Caco-2 (cell line): ENCODE measurements at regions of chr4 and their contacts with region 1.

Region 1: DNA sequence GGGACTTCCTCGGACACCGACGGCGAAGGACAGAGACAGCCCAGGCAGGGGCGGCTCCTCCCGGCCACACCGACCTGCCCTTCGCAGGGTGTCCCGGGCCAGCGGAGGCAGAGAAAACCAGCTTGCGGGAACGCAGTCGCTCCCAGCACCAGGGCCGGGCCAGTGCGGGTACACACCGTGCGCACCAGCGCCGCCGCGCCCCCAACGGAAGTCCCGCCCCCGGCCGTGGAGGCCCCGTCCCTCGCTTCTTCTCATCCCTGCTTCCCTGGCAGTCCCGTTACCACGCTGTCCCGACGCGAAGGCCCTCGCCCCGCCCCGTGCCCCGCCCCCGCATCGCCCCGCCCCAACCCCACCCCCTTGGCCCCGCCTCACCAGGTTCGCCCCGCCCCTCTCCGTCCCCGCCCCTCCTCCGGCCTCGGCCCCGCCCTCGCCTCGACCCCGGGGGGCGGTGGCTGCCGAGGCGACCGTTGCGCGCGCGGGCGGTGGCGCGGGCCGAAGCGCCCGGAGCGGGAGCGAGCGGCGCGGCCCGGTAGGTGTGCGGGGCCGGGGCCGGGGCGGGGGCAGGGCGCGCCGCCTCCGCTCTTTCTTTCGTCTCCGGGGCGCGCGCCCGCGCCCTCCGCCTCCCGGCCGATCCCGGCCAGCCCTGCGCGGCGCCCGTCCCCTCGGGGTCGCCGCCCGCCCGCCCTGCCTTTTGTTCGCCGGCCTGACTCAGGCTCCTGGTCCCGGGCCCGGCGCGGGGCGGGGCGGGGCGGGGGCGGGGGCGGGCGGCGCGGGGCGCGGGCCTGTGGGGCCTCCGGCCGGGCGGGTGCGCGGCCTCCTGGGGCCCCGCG is at the start of gene RGS12:
- DNase-seq: peak; percentile 95 to 96
- H3K4me3 ChIP-seq: peak within 1 kb of the TSS; percentile 82
- H3K4me3 Mint-ChIP-seq: peak within 1 kb of the TSS; percentile 88
- H3K27ac Mint-ChIP-seq: peak within 1 kb of the TSS; percentile 77
- H3K4me1 ChIP-seq: no peaks in the 10 kb centered on the region
- H3K4me1 Mint-ChIP-seq: peaks cover 17% of the 10 kb centered on the region
- H3K27me3 ChIP-seq: no peaks in the 10 kb centered on the region
- H3K27me3 Mint-ChIP-seq: no peaks in the 10 kb centered on the region
- CTCF ChIP-seq: no peak
- total RNA-seq, gene RGS12: 23.1 and 24.1 TPM in 2 replicates

Region 2: DNA sequence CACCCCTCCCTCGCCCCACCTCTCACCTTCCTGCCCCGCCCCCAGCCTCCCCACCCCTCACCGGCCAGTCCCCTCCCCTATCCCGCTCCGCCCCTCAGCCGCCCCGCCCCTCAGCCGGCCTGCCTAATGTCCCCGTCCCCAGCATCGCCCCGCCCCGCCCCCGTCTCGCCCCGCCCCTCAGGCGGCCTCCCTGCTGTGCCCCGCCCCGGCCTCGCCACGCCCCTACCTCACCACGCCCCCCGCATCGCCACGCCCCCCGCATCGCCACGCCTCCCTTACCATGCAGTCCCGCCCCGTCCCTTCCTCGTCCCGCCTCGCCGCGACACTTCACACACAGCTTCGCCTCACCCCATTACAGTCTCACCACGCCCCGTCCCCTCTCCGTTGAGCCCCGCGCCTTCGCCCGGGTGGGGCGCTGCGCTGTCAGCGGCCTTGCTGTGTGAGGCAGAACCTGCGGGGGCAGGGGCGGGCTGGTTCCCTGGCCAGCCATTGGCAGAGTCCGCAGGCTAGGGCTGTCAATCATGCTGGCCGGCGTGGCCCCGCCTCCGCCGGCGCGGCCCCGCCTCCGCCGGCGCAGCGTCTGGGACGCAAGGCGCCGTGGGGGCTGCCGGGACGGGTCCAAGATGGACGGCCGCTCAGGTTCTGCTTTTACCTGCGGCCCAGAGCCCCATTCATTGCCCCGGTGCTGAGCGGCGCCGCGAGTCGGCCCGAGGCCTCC is 218.5 kb before region 1 on chr4 and contains the starts of genes HTT and HTT-AS:
- CTCF ChIA-PET with region 1: no interaction called
- POLR2A ChIA-PET with region 1: no interaction called
- intact Hi-C with region 1: loop called (anchors 1 kb)
- DNase-seq: peak; percentile 93 to 96
- H3K4me3 ChIP-seq: peak within 1 kb of the TSS; percentile 94
- H3K4me3 Mint-ChIP-seq: peak within 1 kb of the TSS; percentile 96
- H3K27ac Mint-ChIP-seq: peak within 1 kb of the TSS; percentile 91
- H3K4me1 ChIP-seq: peaks cover 13% of the 10 kb centered on the region
- H3K4me1 Mint-ChIP-seq: peaks cover 9% of the 10 kb centered on the region
- H3K27me3 ChIP-seq: no peaks in the 10 kb centered on the region
- H3K27me3 Mint-ChIP-seq: no peaks in the 10 kb centered on the region
- CTCF ChIP-seq: peak in 1 of 2 experiments; percentile 11
- total RNA-seq, gene HTT: 57.5 and 63.3 TPM in 2 replicates
- total RNA-seq, gene HTT-AS: not detected in 2 replicates